ENCODE measurements at regions of chr7 and their contacts with region 1.

Region 1: GRCh38 chr7:151315038-151315655 is 26.5 kb upstream of the NUB1 start:
- DNase-seq: peak; percentile 66 to 80 (median 69)
- H3K4me3 ChIP-seq: no peak overlapping the region
- H3K27ac ChIP-seq: no peak overlapping the region
- H3K4me1 ChIP-seq: no peaks in the 10 kb centered on the region
- H3K27me3 ChIP-seq: no peaks in the 10 kb centered on the region
- CTCF ChIP-seq: peak; percentile 52 to 78 (median 65)
- EP300 ChIP-seq: no peak
- POLR2A ChIP-seq: no peak

Region 2: GRCh38 chr7:151123822-151124464 is 191.2 kb before region 1 on chr7:
- intact Hi-C with region 1: no loop called
- DNase-seq: peak; percentile 77 to 88 (median 88)
- H3K4me3 ChIP-seq: no peak overlapping the region
- H3K27ac ChIP-seq: no peak overlapping the region
- H3K4me1 ChIP-seq: peaks cover 8% of the 10 kb centered on the region
- H3K27me3 ChIP-seq: no peaks in the 10 kb centered on the region
- CTCF ChIP-seq: peak; percentile 88 to 93 (median 90)
- EP300 ChIP-seq: no peak
- POLR2A ChIP-seq: no peak

Region 3: GRCh38 chr7:151244196-151244840 is 70.8 kb before region 1 on chr7:
- intact Hi-C with region 1: no loop called
- DNase-seq: peak in 2 of 5 donors; percentile 52 to 60
- H3K4me3 ChIP-seq: no peak overlapping the region
- H3K27ac ChIP-seq: no peak overlapping the region
- H3K4me1 ChIP-seq: peaks cover 13% of the 10 kb centered on the region
- H3K27me3 ChIP-seq: no peaks in the 10 kb centered on the region
- CTCF ChIP-seq: peak; percentile 45 to 57 (median 52)
- EP300 ChIP-seq: no peak
- POLR2A ChIP-seq: no peak

Region 4: DNA sequence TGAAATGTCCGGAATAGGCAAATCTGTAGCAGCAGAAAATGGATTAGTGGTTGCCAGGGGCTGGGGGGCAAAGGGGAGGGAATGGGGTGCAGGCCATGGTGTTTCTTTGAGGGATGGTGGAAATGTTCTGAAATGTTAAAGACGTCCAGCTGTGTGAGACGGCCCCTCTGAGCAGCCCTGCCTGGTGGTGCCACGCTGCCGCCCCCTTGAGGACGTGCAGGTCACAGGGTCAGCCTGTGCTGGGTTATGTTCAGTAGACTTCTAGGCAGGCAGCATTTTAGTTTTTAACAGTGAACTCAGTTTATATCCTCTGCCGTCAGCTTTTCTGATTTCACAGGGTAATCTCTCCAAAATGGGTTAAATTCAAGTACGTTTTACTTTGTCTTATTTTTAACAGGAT is 35.9 kb after region 1 on chr7:
- intact Hi-C with region 1: loop called in 3 of 4 experiments (anchors 5 kb)
- DNase-seq: no peak
- H3K4me3 ChIP-seq: no peak overlapping the region
- H3K27ac ChIP-seq: no peak overlapping the region
- H3K4me1 ChIP-seq: no peaks in the 10 kb centered on the region
- H3K27me3 ChIP-seq: no peaks in the 10 kb centered on the region
- CTCF ChIP-seq: no peak
- EP300 ChIP-seq: no peak
- POLR2A ChIP-seq: no peak

Region 5: GRCh38 chr7:151368136-151368571 is 53.0 kb after region 1 on chr7:
- intact Hi-C with region 1: no loop called
- DNase-seq: peak; percentile 81 to 89 (median 84)
- H3K4me3 ChIP-seq: no peak overlapping the region
- H3K27ac ChIP-seq: no peak overlapping the region
- H3K4me1 ChIP-seq: no peaks in the 10 kb centered on the region
- H3K27me3 ChIP-seq: no peaks in the 10 kb centered on the region
- CTCF ChIP-seq: peak; percentile 59 to 93 (median 87)
- EP300 ChIP-seq: no peak
- POLR2A ChIP-seq: no peak

Region 6: DNA sequence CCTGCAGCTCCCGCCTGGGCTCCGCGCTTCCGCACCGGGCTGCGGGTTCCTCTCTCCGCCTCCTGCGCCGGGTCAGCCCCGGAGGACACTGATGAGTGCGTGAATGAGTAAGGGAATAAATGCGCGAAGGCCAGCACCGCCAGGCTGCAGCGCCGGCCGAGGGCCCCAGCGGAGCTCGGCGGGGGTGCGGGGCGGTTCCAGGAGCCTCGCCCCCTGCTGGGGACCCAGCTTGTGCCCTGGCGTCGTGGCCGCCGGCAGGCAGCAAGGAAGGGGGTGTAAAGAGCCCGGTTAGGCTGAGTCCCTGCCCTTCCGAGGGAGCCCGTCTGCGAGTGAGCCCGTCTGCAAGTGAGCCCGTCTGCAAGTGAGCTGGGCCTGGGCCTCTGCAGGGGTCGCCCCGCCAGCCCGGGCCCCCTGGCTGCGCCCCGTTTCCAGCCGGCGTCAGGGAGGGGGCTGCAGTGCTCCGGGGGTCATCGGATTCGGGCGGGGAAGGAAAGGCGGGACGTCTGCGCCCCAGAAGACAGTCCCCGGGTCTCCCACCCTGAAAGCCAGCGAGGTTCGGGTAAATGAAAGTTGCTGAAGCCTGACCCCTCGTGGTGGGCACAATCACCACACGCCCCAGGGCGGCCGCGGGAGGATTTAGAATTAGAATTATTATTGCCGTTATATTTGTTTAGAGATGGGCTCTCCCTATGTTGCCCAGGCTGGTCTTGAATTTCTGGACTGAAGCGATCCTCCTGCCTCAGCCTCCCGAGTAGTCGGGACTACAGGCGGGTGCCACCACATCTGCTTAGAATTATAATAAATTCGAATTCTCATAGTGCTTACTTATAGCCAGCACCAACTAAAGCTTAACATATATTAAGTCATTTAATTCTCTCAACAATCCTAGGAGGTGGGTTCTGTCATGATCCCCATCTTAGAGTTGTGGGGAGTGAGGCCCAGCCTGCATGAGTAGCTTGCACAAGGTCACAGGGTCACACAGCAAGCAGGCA is 133.4 kb after region 1 on chr7:
- intact Hi-C with region 1: loop called in 1 of 4 experiments (anchors 2 kb)
- DNase-seq: peak; percentile 70 to 86 (median 79)
- H3K4me3 ChIP-seq: peak overlapping the region; percentile 52
- H3K27ac ChIP-seq: peak overlapping the region; percentile 0 to 64
- H3K4me1 ChIP-seq: peaks cover 1% of the 10 kb centered on the region
- H3K27me3 ChIP-seq: no peaks in the 10 kb centered on the region
- CTCF ChIP-seq: peak; percentile 70 to 86 (median 86)
- EP300 ChIP-seq: no peak
- POLR2A ChIP-seq: no peak